ENCODE measurements at regions of chr12 and their contacts with region 1.

Region 1: DNA sequence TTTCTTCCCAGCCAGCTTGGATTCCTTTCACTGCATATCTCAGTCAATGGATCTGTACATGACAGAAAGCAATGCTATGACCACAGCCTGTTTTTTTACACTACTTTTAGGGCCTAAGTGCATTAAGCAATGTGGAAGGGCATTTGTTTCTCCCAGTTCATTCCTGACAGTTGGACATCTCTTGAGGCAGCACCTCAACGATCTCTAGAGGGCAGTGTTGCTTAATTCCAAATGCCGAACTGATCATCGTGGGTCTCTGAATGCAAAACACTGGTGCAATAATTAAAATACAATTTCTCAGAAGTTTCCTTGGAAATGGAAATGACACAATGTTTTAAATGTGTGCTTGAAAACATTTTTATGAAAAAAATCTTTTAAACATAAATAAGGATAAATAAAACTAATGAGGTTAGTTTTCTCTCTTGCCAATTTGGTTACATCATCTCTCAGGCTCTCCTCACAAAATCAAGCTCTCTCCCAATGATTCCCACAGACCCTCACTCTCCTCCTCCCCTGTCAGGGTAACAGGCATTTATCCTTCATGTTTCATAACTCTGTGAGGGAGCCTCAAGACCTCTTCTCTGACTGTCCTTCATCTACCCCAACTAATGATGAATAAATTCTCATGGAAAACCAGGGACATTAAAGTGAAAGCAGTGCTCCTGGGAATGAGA is 192.4 kb upstream of the SLC16A7 start:
- DNase-seq: peak in 1 of 2 donors; percentile 72
- ATAC-seq: peak in 1 of 3 donors; percentile 61
- H3K4me3 ChIP-seq: no peak overlapping the region
- H3K4me3 Mint-ChIP-seq: no peak overlapping the region
- H3K27ac ChIP-seq: no peak overlapping the region
- H3K27ac Mint-ChIP-seq: no peak overlapping the region
- H3K4me1 ChIP-seq: no peaks in the 10 kb centered on the region
- H3K4me1 Mint-ChIP-seq: peaks cover 0 to 5% of the 10 kb centered on the region in 2 donors
- H3K27me3 ChIP-seq: no peaks in the 10 kb centered on the region
- H3K27me3 Mint-ChIP-seq: no peaks in the 10 kb centered on the region
- CTCF ChIP-seq: peak; percentile 63

Region 2: GRCh38 chr12:59708064-59708463 is 304.7 kb after region 1 on chr12:
- intact Hi-C with region 1: no loop called
- DNase-seq: no peak
- ATAC-seq: no peak
- H3K4me3 ChIP-seq: no peak overlapping the region
- H3K4me3 Mint-ChIP-seq: no peak overlapping the region
- H3K27ac ChIP-seq: no peak overlapping the region
- H3K27ac Mint-ChIP-seq: peak overlapping the region in 1 of 2 donors; percentile 55
- H3K4me1 ChIP-seq: no peaks in the 10 kb centered on the region
- H3K4me1 Mint-ChIP-seq: peaks cover 7 to 38% of the 10 kb centered on the region in 2 donors
- H3K27me3 ChIP-seq: no peaks in the 10 kb centered on the region
- H3K27me3 Mint-ChIP-seq: no peaks in the 10 kb centered on the region
- CTCF ChIP-seq: no peak

Region 3: DNA sequence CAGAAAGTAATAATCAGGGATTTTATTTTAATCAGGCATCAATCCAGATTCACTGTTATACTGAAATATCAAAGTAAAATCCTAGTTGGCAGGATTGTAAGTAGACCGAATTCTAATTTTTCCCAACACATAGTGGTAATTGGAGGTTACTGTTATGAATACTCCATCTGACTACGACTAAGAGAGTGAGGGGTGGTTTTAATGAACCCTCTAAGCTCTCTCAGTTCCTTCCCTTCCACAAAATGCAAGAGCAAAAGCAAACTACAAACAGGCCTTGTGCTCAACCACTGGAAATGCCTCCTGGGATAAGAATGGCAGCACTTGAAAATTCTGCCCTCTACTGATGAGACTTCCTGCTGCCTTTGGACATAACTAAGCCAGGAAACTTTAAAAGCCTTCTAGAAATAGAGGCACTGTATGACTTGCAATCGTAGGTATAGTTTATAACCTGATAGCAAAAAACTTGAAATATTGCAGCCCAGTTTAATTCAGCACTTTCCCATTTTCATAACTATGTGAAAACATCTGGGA is 377.3 kb after region 1 on chr12:
- intact Hi-C with region 1: no loop called
- DNase-seq: peak in 1 of 2 donors; percentile 12
- ATAC-seq: no peak
- H3K4me3 ChIP-seq: no peak overlapping the region
- H3K4me3 Mint-ChIP-seq: no peak overlapping the region
- H3K27ac ChIP-seq: no peak overlapping the region
- H3K27ac Mint-ChIP-seq: no peak overlapping the region
- H3K4me1 ChIP-seq: no peaks in the 10 kb centered on the region
- H3K4me1 Mint-ChIP-seq: peaks cover 4 to 10% of the 10 kb centered on the region in 2 donors
- H3K27me3 ChIP-seq: no peaks in the 10 kb centered on the region
- H3K27me3 Mint-ChIP-seq: no peaks in the 10 kb centered on the region
- CTCF ChIP-seq: no peak

Region 4: DNA sequence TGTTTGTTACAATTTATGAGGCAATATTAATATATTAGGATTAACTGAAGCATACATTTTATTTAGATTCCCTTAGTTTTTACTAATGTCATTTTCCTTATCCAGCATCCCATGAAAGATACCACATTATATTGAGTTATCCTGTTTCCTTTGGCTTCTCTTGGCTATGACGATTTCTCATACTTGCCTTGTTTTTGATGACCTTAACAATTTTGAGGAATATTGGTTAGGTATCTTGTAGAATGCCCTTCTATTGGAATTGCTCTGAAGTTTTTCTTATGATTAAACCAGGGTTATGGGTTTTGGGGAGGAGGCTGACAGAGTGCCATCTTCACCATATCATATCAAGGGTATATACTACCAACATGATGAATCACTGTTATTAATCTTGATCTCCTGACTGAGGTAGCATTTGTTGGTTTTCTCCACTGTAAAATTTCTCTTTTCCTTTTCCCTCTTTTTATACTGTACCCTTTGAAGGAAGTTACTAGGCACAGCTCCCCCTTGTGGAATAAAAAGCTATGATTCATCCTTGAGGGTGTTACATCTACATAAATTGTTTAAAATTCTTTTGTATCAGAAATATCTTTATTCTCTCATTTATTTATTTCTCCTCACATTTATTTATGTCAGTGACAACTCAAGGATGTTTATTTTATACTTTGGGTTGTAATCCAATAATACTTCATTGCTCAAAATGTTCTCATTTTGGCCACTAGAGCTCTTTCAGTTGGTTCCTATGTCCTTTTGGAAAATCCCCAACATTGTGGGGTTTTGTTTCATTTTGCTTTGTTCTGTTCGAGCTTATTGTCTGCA is 431.5 kb after region 1 on chr12:
- intact Hi-C with region 1: loop called (anchors 1 kb)
- DNase-seq: peak in 1 of 2 donors; percentile 53
- ATAC-seq: no peak
- H3K4me3 ChIP-seq: no peak overlapping the region
- H3K4me3 Mint-ChIP-seq: no peak overlapping the region
- H3K27ac ChIP-seq: no peak overlapping the region
- H3K27ac Mint-ChIP-seq: no peak overlapping the region
- H3K4me1 ChIP-seq: no peaks in the 10 kb centered on the region
- H3K4me1 Mint-ChIP-seq: no peaks in the 10 kb centered on the region
- H3K27me3 ChIP-seq: no peaks in the 10 kb centered on the region
- H3K27me3 Mint-ChIP-seq: no peaks in the 10 kb centered on the region
- CTCF ChIP-seq: peak; percentile 62

Measured in natural killer cell (primary cell).